IMR-90 (cell line): ENCODE measurements at regions of chr2 and their contacts with region 1.

Region 1: DNA sequence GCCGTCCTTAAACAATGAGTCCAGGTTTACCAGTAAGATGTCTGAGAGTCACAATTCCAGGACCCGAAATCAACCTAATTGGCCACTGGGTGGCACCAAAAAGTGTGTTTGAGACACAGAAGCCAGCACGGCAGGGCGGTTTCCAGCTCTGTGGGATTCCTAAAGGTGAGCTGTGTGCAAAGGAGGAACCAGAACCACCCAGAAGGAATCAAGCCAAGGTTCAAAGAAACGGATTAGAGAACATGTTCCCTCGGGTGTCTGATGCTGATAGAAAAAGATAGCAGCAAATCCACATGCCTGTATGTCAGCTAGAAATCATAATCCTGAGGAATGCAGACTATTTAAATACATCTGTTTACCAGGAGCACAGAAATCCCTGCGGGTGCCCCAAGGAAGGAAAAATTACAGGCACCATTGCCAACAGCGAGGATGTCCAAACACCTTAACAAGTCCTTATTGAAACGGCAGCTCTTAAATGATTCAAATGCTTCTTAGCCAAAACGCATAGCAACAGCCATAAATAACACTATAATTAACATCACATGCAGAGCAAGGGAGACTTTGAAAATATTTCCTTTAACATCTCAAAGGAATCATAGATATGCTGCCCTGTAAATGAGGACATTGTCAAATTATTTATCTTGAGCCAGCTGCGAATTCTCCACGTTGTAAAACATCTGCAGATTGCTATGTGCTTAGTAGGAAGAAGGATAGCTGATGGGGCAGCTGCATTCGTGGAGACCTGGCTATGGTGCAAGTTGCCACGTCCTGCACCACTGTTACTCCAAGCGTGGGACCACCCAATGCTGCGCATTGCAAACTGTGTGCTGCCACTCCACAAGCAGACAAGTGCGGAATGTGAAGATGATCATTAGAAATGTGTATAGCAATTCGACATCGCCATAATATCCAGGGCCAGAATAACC is 318.7 kb upstream of the NCKAP5 start:
- DNase-seq: peak; percentile 80
- ATAC-seq: peak; percentile 69
- H3K4me3 ChIP-seq: no peak overlapping the region
- H3K27ac ChIP-seq: peak overlapping the region; percentile 71; the same call in 1 of the 2 replicates
- H3K4me1 ChIP-seq: peaks cover 22% of the 10 kb centered on the region
- H3K27me3 ChIP-seq: no peaks in the 10 kb centered on the region
- CTCF ChIP-seq: peak; percentile 73
- POLR2A ChIP-seq: no peak
- RAD21 ChIP-seq: peak; percentile 77

Region 2: DNA sequence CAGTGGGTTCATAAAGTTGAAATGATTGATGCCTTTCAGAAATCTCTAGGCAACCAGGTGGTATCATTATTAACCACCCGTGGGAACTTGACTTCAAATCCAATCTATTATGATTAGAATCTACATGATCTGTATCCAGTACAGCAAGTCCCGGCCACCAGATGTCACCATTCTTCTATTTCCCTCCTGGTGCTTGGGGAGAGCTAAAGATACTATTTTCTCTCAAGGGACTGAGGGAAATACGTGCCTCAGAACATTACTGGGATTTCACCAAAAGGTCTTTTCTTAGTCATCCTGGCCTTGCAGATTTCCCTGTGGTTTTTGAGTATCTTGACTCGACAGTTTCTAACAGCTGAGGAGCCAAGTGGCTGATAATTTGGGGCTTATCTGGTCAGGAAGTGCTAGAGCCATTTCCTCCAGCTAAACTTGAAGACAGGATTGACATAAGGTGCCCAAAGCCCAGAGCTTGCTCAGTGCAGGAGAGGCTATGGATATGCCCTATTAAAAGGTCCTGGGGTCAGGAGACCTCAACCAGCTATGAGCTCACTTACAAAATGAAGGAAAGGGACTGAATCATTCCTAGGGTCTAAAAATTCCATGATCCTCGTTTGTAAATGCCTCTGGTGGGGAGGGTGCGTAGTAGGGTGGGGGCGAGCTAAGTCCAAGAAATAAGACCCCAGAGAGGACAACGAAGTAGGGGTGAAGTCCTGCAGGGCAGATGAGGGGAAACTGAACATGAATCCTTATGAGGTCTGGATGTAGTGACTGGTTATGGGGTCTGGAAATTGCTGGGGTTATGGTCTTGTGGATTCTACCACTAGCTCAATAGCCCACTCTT is 231.5 kb after region 1 on chr2:
- CTCF ChIA-PET with region 1: interaction called, 7 read pairs
- POLR2A ChIA-PET with region 1: interaction called, 3 read pairs
- dilution Hi-C with region 1: no loop called
- in situ Hi-C with region 1: loop called (anchors 10 kb)
- intact Hi-C with region 1: loop called (anchors 1 kb)
- DNase-seq: peak; percentile 98
- ATAC-seq: peak; percentile 48
- H3K4me3 ChIP-seq: no peak overlapping the region
- H3K27ac ChIP-seq: peak overlapping the region; percentile 77; the same call in 1 of the 2 replicates
- H3K4me1 ChIP-seq: peaks cover 18% of the 10 kb centered on the region
- H3K27me3 ChIP-seq: no peaks in the 10 kb centered on the region
- CTCF ChIP-seq: peak; percentile 95
- POLR2A ChIP-seq: no peak
- RAD21 ChIP-seq: peak; percentile 98

Region 3: GRCh38 chr2:134245340-134245984 is 358.5 kb after region 1 on chr2:
- CTCF ChIA-PET with region 1: interaction called, 9 read pairs
- POLR2A ChIA-PET with region 1: no interaction called
- dilution Hi-C with region 1: no loop called
- in situ Hi-C with region 1: loop called (anchors 25 kb)
- intact Hi-C with region 1: loop called (anchors 2 kb)
- DNase-seq: peak; percentile 71
- ATAC-seq: peak; percentile 52
- H3K4me3 ChIP-seq: no peak overlapping the region
- H3K27ac ChIP-seq: no peak overlapping the region
- H3K4me1 ChIP-seq: peaks cover 11% of the 10 kb centered on the region
- H3K27me3 ChIP-seq: no peaks in the 10 kb centered on the region
- CTCF ChIP-seq: peak; percentile 74
- POLR2A ChIP-seq: no peak
- RAD21 ChIP-seq: peak; percentile 77

Region 4: DNA sequence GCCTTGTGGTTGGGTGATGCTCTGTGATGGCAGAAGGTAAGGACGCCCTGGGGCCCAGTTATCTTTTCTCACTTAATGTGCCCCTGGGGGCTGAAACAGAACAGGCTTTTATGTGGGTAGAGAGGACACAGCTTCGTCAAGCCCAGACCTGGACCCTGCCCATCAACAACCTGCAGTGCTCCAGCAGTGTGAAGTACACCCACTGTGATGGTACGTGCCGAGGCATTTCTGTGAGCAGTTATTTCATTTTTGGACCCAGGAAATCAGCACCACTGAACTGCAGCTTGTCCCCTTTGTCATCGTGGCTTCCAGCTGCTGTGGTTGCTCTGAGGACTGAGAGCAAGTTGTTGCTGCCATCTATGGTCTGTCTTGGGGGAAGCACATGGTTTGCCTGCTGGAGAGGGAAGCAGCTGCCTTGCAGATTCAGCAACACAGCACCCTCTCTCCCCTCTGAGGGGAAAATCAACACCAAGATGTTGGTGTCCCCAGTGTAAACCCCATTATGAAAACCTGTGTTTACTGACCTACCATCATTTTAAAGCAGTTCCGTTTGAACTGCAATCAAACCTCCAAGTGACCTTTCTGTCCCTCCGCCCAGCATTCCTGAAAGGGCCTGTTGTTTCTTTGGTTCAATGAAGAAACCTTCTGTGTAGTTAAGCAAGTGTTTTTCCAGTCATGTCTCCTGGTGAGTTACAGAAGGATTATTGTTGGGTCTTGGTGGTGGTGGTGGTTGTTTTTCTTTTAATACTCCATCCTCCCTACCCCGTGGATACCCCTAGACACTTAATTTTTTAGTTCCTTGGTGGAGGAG is 525.0 kb after region 1 on chr2:
- CTCF ChIA-PET with region 1: interaction called, 22 read pairs
- POLR2A ChIA-PET with region 1: no interaction called
- dilution Hi-C with region 1: no loop called
- in situ Hi-C with region 1: loop called (anchors 25 kb)
- intact Hi-C with region 1: loop called (anchors 1 kb)
- DNase-seq: peak; percentile 86
- ATAC-seq: peak; percentile 63
- H3K4me3 ChIP-seq: no peak overlapping the region
- H3K27ac ChIP-seq: peak overlapping the region; percentile 24
- H3K4me1 ChIP-seq: peaks cover 39% of the 10 kb centered on the region
- H3K27me3 ChIP-seq: no peaks in the 10 kb centered on the region
- CTCF ChIP-seq: peak; percentile 87
- POLR2A ChIP-seq: 0 out of 2 replicates have a peak, but pooled peaks have one; percentile 28
- RAD21 ChIP-seq: peak; percentile 92

Region 5: GRCh38 chr2:134460583-134460998 is 573.6 kb after region 1 on chr2:
- CTCF ChIA-PET with region 1: no interaction called
- POLR2A ChIA-PET with region 1: no interaction called
- dilution Hi-C with region 1: no loop called
- in situ Hi-C with region 1: loop called (anchors 10 kb)
- intact Hi-C with region 1: no loop called
- DNase-seq: peak; percentile 47
- ATAC-seq: peak; percentile 74
- H3K4me3 ChIP-seq: no peak overlapping the region
- H3K27ac ChIP-seq: no peak overlapping the region
- H3K4me1 ChIP-seq: no peaks in the 10 kb centered on the region
- H3K27me3 ChIP-seq: peaks cover 15% of the 10 kb centered on the region
- CTCF ChIP-seq: peak; percentile 58
- POLR2A ChIP-seq: no peak
- RAD21 ChIP-seq: peak; percentile 66